ENCODE measurements at regions of chr6 and their contacts with region 1.

Region 1: DNA sequence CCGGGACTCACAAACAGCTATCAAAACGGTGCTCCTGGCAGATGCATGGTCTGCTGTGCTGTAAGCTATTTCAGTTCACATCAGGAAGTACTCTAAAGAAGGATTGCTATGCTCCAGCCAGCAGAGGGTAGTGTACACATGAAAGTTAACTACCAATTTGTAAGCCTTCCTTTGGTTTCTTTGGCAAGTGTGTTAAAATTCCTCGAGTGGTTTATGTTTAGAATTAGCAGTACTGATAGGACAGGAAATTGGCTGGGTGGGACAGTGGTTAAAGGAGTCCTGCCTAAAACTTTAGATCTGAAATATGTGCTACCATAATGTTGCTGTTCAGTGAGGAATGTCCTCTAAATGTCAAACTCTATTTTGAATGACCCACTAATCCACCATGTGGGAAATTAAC is 47.4 kb downstream of the TRMT11 start:
- DNase-seq: peak; percentile 68
- H3K4me3 Mint-ChIP-seq: no peak overlapping the region
- H3K27ac Mint-ChIP-seq: peak overlapping the region; percentile 69
- H3K4me1 Mint-ChIP-seq: peaks cover 12% of the 10 kb centered on the region
- H3K27me3 Mint-ChIP-seq: no peaks in the 10 kb centered on the region
- CTCF ChIP-seq: peak; percentile 68

Region 2: DNA sequence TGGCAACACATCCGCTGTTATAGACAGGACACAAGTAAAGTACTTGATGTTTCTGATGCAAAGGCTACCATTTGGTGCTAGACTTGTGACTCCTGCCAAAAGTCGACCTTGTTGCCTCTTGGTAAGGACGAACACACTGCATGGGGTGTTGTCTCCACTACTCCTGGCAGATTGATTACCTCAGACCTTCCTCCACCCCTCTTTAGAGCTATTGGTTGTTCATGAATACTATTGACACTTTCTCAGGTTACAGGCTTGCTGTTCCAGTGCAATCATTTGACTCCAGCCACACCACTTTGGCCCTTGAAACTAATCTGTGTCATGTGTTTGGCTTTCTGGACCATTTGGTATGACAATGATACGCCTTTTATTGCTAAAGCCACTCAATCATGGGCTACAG is 14.9 kb after region 1 on chr6:
- CTCF ChIA-PET with region 1: interaction called, 16 read pairs
- POLR2A ChIA-PET with region 1: interaction called, 3 read pairs
- intact Hi-C with region 1: no loop called
- DNase-seq: no peak
- H3K4me3 Mint-ChIP-seq: no peak overlapping the region
- H3K27ac Mint-ChIP-seq: no peak overlapping the region
- H3K4me1 Mint-ChIP-seq: no peaks in the 10 kb centered on the region
- H3K27me3 Mint-ChIP-seq: no peaks in the 10 kb centered on the region
- CTCF ChIP-seq: no peak

Region 3: DNA sequence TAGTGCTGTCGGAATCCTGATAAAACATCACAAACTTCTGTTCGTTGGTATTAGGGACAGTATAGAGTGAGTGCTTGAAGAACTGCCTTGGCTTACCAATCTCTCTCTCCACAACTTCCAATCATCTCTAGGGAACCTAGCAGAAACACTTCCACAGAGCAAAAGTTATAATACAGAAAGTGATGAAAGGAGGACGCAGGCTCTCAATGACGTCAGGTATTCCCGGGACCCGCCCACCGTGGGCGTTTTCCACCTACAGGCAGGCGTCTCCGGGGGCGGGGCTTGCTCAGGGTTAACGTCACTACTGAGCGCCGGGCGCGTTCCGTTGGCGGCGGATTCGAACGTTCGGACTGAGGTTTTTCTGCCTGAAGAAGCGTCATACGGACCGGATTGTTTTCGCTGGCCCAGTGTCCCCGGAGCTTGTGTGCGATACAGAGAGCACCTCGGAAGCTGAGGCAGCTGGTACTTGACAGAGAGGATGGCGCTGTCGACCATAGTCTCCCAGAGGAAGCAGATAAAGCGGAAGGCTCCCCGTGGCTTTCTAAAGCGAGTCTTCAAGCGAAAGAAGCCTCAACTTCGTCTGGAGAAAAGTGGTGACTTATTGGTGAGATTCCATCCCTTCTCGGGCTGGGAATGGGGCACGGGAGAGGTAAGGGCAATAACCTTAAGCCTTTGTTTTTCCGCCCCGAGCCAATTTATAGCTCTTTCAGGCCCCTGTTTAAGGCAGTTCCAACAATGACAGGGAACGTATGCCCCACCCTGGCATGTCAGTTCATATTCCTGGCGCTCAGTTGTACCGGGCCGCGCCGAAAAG is 306.3 kb after region 1 on chr6 and contains the start of gene CENPW:
- CTCF ChIA-PET with region 1: no interaction called
- POLR2A ChIA-PET with region 1: no interaction called
- intact Hi-C with region 1: loop called (anchors 5 kb)
- DNase-seq: peak; percentile 92
- H3K4me3 Mint-ChIP-seq: no peak within 1 kb of the TSS
- H3K27ac Mint-ChIP-seq: no peak within 1 kb of the TSS
- H3K4me1 Mint-ChIP-seq: peaks cover 37% of the 10 kb centered on the region
- H3K27me3 Mint-ChIP-seq: no peaks in the 10 kb centered on the region
- CTCF ChIP-seq: no peak
- total RNA-seq, gene CENPW: 31.1 and 35.0 TPM in 2 replicates

Region 4: GRCh38 chr6:127120787-127121636 is 1087.3 kb after region 1 on chr6:
- CTCF ChIA-PET with region 1: interaction called, 3 read pairs
- POLR2A ChIA-PET with region 1: no interaction called
- intact Hi-C with region 1: loop called (anchors 1 kb)
- DNase-seq: peak; percentile 68
- H3K4me3 Mint-ChIP-seq: no peak overlapping the region
- H3K27ac Mint-ChIP-seq: no peak overlapping the region
- H3K4me1 Mint-ChIP-seq: peaks cover 4% of the 10 kb centered on the region
- H3K27me3 Mint-ChIP-seq: peaks cover 99% of the 10 kb centered on the region
- CTCF ChIP-seq: peak; percentile 84

Measured in MCF 10A (cell line).